Activated CD4-positive, alpha-beta memory T cell treated with anti-CD3 and anti-CD28 coated beads for 36 hours (primary cell): ENCODE measurements at regions of chr14 and their contacts with region 1.

Region 1: GRCh38 chr14:89416002-89416995 is 734 bp downstream of the FOXN3 start:
- DNase-seq: peak; percentile 99
- H3K4me3 Mint-ChIP-seq: peak overlapping the region; percentile 87
- H3K27ac Mint-ChIP-seq: peak overlapping the region; percentile 81
- H3K4me1 Mint-ChIP-seq: peaks cover 46% of the 10 kb centered on the region
- H3K27me3 Mint-ChIP-seq: no peaks in the 10 kb centered on the region

Region 2: GRCh38 chr14:88792572-88793258 is 623.6 kb before region 1 on chr14 and contains the start of gene EML5:
- CTCF ChIA-PET with region 1: no interaction called
- POLR2A ChIA-PET with region 1: no interaction called
- intact Hi-C with region 1: loop called (anchors 5 kb)
- DNase-seq: peak; percentile 87
- H3K4me3 Mint-ChIP-seq: peak within 1 kb of the TSS; percentile 89
- H3K27ac Mint-ChIP-seq: peak within 1 kb of the TSS; percentile 74
- H3K4me1 Mint-ChIP-seq: peaks cover 25% of the 10 kb centered on the region
- H3K27me3 Mint-ChIP-seq: peaks cover 3% of the 10 kb centered on the region
- total RNA-seq, gene EML5: 5.7 to 6.2 TPM

Region 3: DNA sequence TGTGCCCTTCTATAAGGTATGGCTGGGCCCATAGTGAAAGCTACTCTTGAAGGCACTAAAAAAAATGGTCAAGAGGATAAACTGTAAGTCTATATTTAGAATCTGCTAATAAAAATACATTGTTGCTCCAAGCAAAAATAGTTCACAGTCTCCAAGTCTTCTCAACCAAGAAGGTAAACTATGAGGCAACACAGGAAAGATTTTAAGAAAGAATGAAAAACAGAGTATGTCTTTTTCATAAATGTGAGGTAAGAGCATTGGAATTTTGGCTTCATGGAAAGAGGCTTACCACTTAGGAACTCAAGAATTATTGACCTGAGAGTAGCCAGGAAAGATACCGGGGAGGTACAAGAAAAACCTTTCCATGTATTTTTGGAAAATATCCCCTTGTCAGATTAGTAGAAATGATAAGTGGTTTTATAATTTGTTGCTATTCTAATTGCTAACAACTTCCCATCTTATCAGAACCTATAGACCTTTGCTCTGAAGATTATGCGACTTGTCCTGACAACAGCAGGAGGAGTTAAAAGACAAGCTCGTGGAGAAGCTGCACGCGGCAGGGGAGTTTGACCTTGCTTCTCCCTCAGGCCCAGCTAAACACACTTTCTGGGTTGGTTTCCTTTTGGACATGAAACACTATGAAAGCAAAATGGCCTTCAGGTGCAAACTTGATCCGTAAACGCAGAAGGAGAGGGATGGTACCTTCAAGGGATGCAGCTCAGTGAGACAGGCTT is 237.3 kb before region 1 on chr14:
- CTCF ChIA-PET with region 1: no interaction called
- POLR2A ChIA-PET with region 1: no interaction called
- intact Hi-C with region 1: loop called (anchors 1 kb)
- DNase-seq: no peak
- H3K4me3 Mint-ChIP-seq: no peak overlapping the region
- H3K27ac Mint-ChIP-seq: no peak overlapping the region
- H3K4me1 Mint-ChIP-seq: peaks cover 8% of the 10 kb centered on the region
- H3K27me3 Mint-ChIP-seq: no peaks in the 10 kb centered on the region

Region 4: GRCh38 chr14:89365061-89365801 is 51.1 kb before region 1 on chr14:
- CTCF ChIA-PET with region 1: no interaction called
- POLR2A ChIA-PET with region 1: no interaction called
- intact Hi-C with region 1: loop called (anchors 1 kb)
- DNase-seq: peak; percentile 73
- H3K4me3 Mint-ChIP-seq: peak overlapping the region; percentile 73
- H3K27ac Mint-ChIP-seq: peak overlapping the region; percentile 93
- H3K4me1 Mint-ChIP-seq: peaks cover 53% of the 10 kb centered on the region
- H3K27me3 Mint-ChIP-seq: no peaks in the 10 kb centered on the region

Region 5: DNA sequence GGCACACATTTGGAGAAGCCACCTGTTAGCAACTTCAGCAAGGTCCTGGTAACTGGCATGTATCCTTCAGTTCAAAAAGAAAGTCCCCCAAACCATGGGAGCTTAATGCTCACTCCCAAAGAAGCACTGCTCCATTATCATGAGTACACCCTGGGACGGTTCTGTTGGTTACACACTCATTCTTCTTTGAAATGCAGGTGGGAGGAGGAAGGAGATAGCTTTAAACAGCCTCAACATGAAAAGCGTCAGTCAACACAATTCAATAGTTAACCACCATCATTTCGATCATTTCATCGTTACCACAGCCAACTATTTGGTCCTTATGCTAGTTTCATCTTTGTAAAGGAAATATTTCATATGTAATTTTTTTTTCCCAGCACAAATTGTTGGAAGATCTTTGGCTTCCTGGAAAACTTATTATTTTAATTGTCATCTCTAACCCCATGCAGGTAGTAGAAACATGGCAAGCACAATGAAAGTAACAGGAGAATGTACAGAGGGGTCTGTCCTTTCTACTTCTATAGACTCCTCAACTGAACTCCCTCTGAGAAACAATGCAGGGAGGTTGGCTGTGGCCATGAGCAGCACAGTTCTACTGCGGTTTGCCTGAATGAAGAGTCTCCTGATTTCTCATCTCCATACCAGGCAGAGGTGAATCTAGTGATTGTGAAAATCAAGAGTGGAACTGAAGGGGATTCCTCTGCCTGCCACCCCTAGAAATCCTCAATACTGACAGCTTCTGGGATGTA is 197.1 kb after region 1 on chr14:
- CTCF ChIA-PET with region 1: no interaction called
- POLR2A ChIA-PET with region 1: no interaction called
- intact Hi-C with region 1: loop called (anchors 1 kb)
- DNase-seq: peak; percentile 69
- H3K4me3 Mint-ChIP-seq: peak overlapping the region; percentile 56
- H3K27ac Mint-ChIP-seq: peak overlapping the region; percentile 86
- H3K4me1 Mint-ChIP-seq: peaks cover 75% of the 10 kb centered on the region
- H3K27me3 Mint-ChIP-seq: no peaks in the 10 kb centered on the region

Region 6: GRCh38 chr14:89915114-89915878 is 499.0 kb after region 1 on chr14:
- CTCF ChIA-PET with region 1: no interaction called
- POLR2A ChIA-PET with region 1: no interaction called
- intact Hi-C with region 1: loop called (anchors 5 kb)
- DNase-seq: peak; percentile 69
- H3K4me3 Mint-ChIP-seq: no peak overlapping the region
- H3K27ac Mint-ChIP-seq: no peak overlapping the region
- H3K4me1 Mint-ChIP-seq: peaks cover 3% of the 10 kb centered on the region
- H3K27me3 Mint-ChIP-seq: peaks cover 2% of the 10 kb centered on the region